ENCODE measurements at regions of chr1 and their contacts with region 1.

Region 1: DNA sequence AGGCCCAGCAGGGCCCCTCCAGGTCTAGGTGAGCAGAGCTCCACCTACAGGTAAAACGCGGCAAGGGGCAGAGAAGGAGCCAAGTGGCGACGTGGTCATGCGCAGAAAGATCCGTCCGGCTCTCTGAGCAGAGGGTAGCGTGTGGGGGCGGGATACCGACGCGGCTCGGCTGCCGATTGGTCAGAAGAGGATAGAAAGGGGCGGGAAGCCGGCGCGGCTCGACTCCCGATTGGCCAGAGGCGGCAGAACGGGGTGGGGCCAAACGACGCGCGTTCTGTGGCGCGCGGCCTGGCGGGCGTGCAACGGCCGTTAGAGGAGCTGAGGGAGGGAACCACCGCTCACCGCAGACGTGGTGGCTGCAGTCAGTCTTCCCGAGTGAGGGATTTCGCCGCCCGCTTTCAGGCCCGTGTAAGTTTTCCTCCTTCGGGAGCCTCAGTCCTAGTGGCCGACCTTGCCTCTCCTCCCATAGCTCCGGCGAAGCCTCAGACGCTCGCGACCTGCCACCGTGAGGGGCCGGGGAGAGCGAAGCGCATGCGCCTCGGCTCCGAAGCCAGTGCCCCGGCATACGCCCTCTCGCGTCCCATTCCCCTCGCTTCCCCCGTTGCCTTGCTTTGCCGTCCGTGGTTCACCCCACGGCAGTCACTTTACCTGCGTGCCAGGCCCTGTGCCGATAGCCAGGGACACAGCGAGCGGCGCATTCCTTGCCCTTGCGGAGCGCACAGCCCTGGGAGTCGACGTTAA is at the start of gene CEP85:
- DNase-seq: peak; percentile 99
- ATAC-seq: peak; percentile 94
- H3K4me3 Mint-ChIP-seq: peak within 1 kb of the TSS; percentile 98
- H3K27ac Mint-ChIP-seq: peak within 1 kb of the TSS; percentile 92
- H3K4me1 Mint-ChIP-seq: peaks cover 27% of the 10 kb centered on the region
- H3K27me3 Mint-ChIP-seq: no peaks in the 10 kb centered on the region
- CTCF ChIP-seq: peak; percentile 26
- total RNA-seq, gene CEP85: 32.8 to 33.7 TPM

Region 2: GRCh38 chr1:25695090-25695770 is 538.8 kb before region 1 on chr1:
- CTCF ChIA-PET with region 1: no interaction called
- POLR2A ChIA-PET with region 1: no interaction called
- intact Hi-C with region 1: no loop called
- DNase-seq: no peak
- ATAC-seq: no peak
- H3K4me3 Mint-ChIP-seq: no peak overlapping the region
- H3K27ac Mint-ChIP-seq: no peak overlapping the region
- H3K4me1 Mint-ChIP-seq: peaks cover 47% of the 10 kb centered on the region
- H3K27me3 Mint-ChIP-seq: no peaks in the 10 kb centered on the region
- CTCF ChIP-seq: no peak

Region 3: DNA sequence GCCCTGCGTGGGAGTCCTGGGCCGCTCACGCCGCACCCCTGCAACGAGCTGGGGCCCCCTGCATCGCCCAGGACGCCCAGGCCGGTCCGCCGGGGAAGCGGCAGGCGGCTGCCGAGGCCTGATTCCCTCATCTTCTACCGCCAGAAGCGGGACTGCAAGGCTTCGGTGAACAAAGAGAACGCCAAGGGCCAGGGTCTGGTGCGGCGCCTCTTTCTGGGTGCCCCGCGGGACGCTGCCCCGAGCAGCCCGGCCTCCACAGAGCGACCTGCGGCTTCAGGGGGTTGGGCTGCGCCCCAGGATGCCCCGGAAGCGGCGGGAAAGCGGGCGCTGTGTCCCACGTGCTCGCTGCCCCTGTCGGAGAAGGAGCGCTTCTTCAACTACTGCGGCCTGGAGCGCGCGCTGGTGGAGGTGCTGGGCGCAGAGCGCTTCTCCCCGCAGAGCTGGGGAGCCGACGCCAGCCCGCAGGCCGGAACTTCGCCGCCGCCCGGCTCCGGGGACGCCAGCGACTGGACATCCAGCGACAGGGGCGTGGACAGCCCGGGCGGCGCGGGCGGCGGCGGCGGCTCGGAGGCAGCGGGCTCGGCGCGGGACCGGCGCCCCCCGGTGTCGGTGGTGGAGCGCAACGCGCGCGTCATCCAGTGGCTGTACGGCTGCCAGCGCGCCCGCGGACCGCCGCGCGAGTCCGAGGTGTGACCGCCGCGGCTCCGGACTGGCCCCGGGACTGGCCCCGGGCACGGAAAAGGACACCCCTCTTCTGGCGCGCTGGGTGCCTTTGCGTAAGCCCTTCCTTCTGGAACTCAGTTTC is 72.5 kb before region 1 on chr1:
- CTCF ChIA-PET with region 1: interaction called, 6 read pairs
- POLR2A ChIA-PET with region 1: interaction called, 3 read pairs
- intact Hi-C with region 1: loop called (anchors 5 kb)
- DNase-seq: peak; percentile 56
- ATAC-seq: peak; percentile 60
- H3K4me3 Mint-ChIP-seq: peak overlapping the region; percentile 61
- H3K27ac Mint-ChIP-seq: no peak overlapping the region
- H3K4me1 Mint-ChIP-seq: peaks cover 10% of the 10 kb centered on the region
- H3K27me3 Mint-ChIP-seq: peaks cover 27% of the 10 kb centered on the region
- CTCF ChIP-seq: no peak

Region 4: GRCh38 chr1:26203642-26204318 is 30.3 kb before region 1 on chr1:
- CTCF ChIA-PET with region 1: interaction called, 11 read pairs
- POLR2A ChIA-PET with region 1: no interaction called
- intact Hi-C with region 1: no loop called
- DNase-seq: peak; percentile 25
- ATAC-seq: no peak
- H3K4me3 Mint-ChIP-seq: no peak overlapping the region
- H3K27ac Mint-ChIP-seq: no peak overlapping the region
- H3K4me1 Mint-ChIP-seq: peaks cover 14% of the 10 kb centered on the region
- H3K27me3 Mint-ChIP-seq: no peaks in the 10 kb centered on the region
- CTCF ChIP-seq: no peak

Region 5: DNA sequence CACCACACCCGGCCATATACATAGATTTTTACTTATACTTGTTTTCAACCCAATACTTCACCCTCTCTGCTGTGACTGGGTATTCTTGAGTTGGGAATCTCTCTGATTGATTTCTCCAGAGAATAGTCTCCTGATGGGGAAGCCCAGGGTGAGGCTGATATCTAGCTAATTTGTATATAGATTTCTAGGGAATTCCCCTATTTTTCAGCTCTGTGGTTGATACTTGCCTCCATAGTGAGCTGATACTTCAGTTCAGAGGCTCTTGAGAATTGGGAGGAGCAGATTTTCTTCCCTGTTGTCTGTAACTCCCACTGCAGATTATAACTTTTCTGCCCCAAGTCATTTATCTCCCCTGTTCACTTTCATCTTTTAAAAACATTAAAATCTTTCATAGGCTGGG is 31.3 kb after region 1 on chr1:
- CTCF ChIA-PET with region 1: interaction called, 24 read pairs
- POLR2A ChIA-PET with region 1: interaction called, 3 read pairs
- intact Hi-C with region 1: no loop called
- DNase-seq: no peak
- ATAC-seq: peak; percentile 39
- H3K4me3 Mint-ChIP-seq: no peak overlapping the region
- H3K27ac Mint-ChIP-seq: peak overlapping the region; percentile 3
- H3K4me1 Mint-ChIP-seq: peaks cover 7% of the 10 kb centered on the region
- H3K27me3 Mint-ChIP-seq: no peaks in the 10 kb centered on the region
- CTCF ChIP-seq: no peak

Region 6: DNA sequence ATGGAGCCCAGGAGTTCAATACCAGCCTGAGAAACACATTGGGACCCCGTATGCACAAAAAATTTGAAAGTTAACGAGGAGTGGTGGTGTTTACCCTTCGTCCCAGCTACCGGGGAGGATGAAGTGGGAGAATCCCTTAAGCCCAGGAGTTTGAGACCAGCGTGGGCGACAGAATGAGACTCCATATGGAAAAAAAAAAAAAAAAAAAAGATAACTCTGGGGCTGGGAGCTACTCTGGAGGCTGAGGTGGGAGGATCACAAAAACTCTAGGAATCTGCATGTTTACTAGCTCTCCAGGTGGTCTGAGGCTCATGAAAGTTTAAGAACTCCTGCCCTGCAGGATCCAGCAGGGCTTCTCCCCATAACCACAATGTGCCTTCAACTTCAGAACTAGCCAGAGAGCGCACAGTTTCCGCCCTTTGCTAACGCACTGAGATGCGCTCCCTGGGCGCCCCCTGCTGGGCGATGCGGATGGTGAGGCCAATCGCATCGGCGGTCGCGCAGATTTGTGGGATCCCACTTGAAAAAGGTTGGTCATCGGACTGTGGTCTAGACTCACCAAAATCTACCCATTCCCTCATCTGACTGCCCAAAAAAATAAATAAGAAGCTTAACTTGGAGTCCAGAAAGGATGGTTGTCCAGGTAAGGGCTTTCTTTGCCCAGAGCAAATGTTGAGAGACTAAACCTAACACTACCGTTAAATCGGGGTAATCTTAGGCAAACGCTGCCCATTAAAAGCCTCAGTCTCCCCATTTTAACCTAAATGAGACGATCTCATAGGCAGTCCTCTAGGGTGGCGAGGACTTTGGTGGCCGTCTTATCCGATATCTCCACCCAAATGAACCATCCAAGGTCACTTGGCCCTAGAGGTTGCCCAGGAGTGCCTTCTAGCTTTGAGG is 129.7 kb after region 1 on chr1:
- CTCF ChIA-PET with region 1: interaction called, 18 read pairs
- POLR2A ChIA-PET with region 1: interaction called, 3 read pairs
- intact Hi-C with region 1: no loop called
- DNase-seq: peak; percentile 94
- ATAC-seq: peak; percentile 70
- H3K4me3 Mint-ChIP-seq: no peak overlapping the region
- H3K27ac Mint-ChIP-seq: no peak overlapping the region
- H3K4me1 Mint-ChIP-seq: peaks cover 43% of the 10 kb centered on the region
- H3K27me3 Mint-ChIP-seq: peaks cover 17% of the 10 kb centered on the region
- CTCF ChIP-seq: peak; percentile 98